ENCODE measurements at regions of chr13 and their contacts with region 1.

Region 1: GRCh38 chr13:41222259-41222852 is 28.0 kb upstream of the KBTBD7 start:
- DNase-seq: no peak
- H3K4me3 ChIP-seq: no peak overlapping the region
- H3K27ac ChIP-seq: no peak overlapping the region
- H3K27me3 ChIP-seq: no peaks in the 10 kb centered on the region
- CTCF ChIP-seq: peak; percentile 70

Region 2: GRCh38 chr13:41075034-41075433 is 147.3 kb before region 1 on chr13:
- CTCF ChIA-PET with region 1: interaction called, 22 read pairs
- POLR2A ChIA-PET with region 1: no interaction called
- DNase-seq: no peak
- H3K4me3 ChIP-seq: no peak overlapping the region
- H3K27ac ChIP-seq: no peak overlapping the region
- H3K27me3 ChIP-seq: no peaks in the 10 kb centered on the region
- CTCF ChIP-seq: peak; percentile 65

Region 3: GRCh38 chr13:41310963-41311606 is 88.7 kb after region 1 on chr13 and contains the start of gene NAA16:
- CTCF ChIA-PET with region 1: no interaction called
- POLR2A ChIA-PET with region 1: no interaction called
- DNase-seq: peak; percentile 72
- H3K4me3 ChIP-seq: peak within 1 kb of the TSS; percentile 87
- H3K27ac ChIP-seq: peak within 1 kb of the TSS; percentile 83
- H3K27me3 ChIP-seq: no peaks in the 10 kb centered on the region
- CTCF ChIP-seq: no peak
- polyA plus RNA-seq, gene NAA16: 11.9 and 14.9 TPM in 2 replicates